HepG2 (cell line): ENCODE measurements at regions of chr15 and their contacts with region 1.

Region 1: GRCh38 chr15:42920519-42921227 is at the start of gene TTBK2:
- DNase-seq: peak; percentile 96
- ATAC-seq: peak; percentile 99
- H3K4me3 ChIP-seq: peak within 1 kb of the TSS; percentile 80 to 94 (median 82)
- H3K27ac ChIP-seq: peak within 1 kb of the TSS; percentile 57
- H3K4me1 ChIP-seq: peaks cover 25% of the 10 kb centered on the region
- H3K27me3 ChIP-seq: no peaks in the 10 kb centered on the region; a peak in 1 of 5 replicates
- CTCF ChIP-seq: 0 out of 2 replicates have a peak, but pooled peaks have one; percentile 16
- EP300 ChIP-seq: no peak
- POLR2A ChIP-seq: peak; percentile 61 to 81
- RAD21 ChIP-seq: no peak
- total RNA-seq, gene TTBK2: 7.4 and 8.1 TPM in 2 replicates

Region 2: GRCh38 chr15:42704492-42704926 is 216.2 kb before region 1 on chr15:
- CTCF ChIA-PET with region 1: interaction called, 15 read pairs
- POLR2A ChIA-PET with region 1: no interaction called
- in situ Hi-C with region 1: no loop called
- intact Hi-C with region 1: no loop called
- DNase-seq: peak; percentile 65
- ATAC-seq: peak; percentile 100
- H3K4me3 ChIP-seq: no peak overlapping the region
- H3K27ac ChIP-seq: no peak overlapping the region
- H3K4me1 ChIP-seq: peaks cover 17% of the 10 kb centered on the region
- H3K27me3 ChIP-seq: no peaks in the 10 kb centered on the region
- CTCF ChIP-seq: peak; percentile 93
- EP300 ChIP-seq: no peak
- POLR2A ChIP-seq: no peak
- RAD21 ChIP-seq: peak; percentile 84

Region 3: GRCh38 chr15:42736793-42737528 is 183.7 kb before region 1 on chr15 and contains the start of gene CDAN1:
- CTCF ChIA-PET with region 1: interaction called, 22 read pairs
- POLR2A ChIA-PET with region 1: no interaction called
- in situ Hi-C with region 1: loop called (anchors 5 kb)
- intact Hi-C with region 1: no loop called
- DNase-seq: peak; percentile 73
- ATAC-seq: peak; percentile 93
- H3K4me3 ChIP-seq: peak within 1 kb of the TSS; percentile 76 to 94 (median 86)
- H3K27ac ChIP-seq: peak within 1 kb of the TSS; percentile 81
- H3K4me1 ChIP-seq: peaks cover 21% of the 10 kb centered on the region
- H3K27me3 ChIP-seq: no peaks in the 10 kb centered on the region
- CTCF ChIP-seq: no peak; the same call in 1 of the 2 replicates
- EP300 ChIP-seq: no peak
- POLR2A ChIP-seq: peak; percentile 81 to 85
- RAD21 ChIP-seq: no peak
- total RNA-seq, gene CDAN1: 10.8 and 16.1 TPM in 2 replicates

Region 4: DNA sequence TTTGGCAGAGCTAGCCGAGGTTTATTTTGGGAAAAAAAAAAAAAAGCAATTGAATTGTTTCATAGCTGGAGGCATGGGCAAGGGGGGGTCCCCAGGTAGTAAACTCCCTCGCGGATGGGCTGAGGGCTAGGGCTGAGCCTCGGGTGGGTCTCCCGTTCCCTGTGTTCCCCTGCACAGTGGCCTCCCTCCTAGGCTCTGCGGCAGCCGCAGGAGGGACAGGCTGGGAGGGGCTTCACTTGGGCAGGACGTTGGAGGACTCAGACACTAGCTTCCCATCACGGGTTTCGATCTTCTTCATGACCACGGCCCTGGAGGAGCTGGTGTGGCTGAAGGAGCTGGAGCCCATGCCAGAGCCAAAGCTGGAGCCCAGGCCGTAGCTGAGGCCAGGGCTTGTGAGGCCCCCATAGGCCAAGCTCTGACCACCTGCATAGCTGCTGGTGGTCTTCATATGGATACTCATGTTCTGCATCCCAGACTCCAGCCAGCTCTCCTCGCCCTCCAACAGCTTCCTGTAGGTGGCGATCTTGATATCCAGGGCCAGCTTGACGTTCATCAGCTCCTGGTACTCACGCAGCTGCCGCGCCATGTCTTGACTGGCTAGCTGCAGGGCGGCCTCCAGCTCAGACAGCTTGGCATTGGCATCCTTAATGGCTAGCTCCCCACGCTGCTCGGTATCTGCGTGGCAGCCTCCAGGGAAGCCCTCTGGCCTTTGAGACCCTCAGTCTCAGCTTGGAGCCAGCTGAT is 119.8 kb before region 1 on chr15:
- CTCF ChIA-PET with region 1: no interaction called
- POLR2A ChIA-PET with region 1: no interaction called
- in situ Hi-C with region 1: loop called (anchors 10 kb)
- intact Hi-C with region 1: loop called (anchors 10 kb)
- DNase-seq: peak; percentile 12
- ATAC-seq: no peak
- H3K4me3 ChIP-seq: no peak overlapping the region
- H3K27ac ChIP-seq: no peak overlapping the region
- H3K4me1 ChIP-seq: no peaks in the 10 kb centered on the region
- H3K27me3 ChIP-seq: no peaks in the 10 kb centered on the region
- CTCF ChIP-seq: peak; percentile 57
- EP300 ChIP-seq: no peak
- POLR2A ChIP-seq: no peak
- RAD21 ChIP-seq: no peak

Region 5: GRCh38 chr15:42973114-42973513 is 52.4 kb after region 1 on chr15:
- CTCF ChIA-PET with region 1: no interaction called
- POLR2A ChIA-PET with region 1: no interaction called
- in situ Hi-C with region 1: no loop called
- intact Hi-C with region 1: no loop called
- DNase-seq: no peak
- ATAC-seq: no peak
- H3K4me3 ChIP-seq: no peak overlapping the region
- H3K27ac ChIP-seq: no peak overlapping the region
- H3K4me1 ChIP-seq: peaks cover 20% of the 10 kb centered on the region
- H3K27me3 ChIP-seq: no peaks in the 10 kb centered on the region
- CTCF ChIP-seq: no peak
- EP300 ChIP-seq: no peak
- POLR2A ChIP-seq: no peak
- RAD21 ChIP-seq: no peak